Right ventricle myocardium superior (tissue), 1 donor: ENCODE measurements at regions of chr18 and their contacts with region 1.

Region 1: DNA sequence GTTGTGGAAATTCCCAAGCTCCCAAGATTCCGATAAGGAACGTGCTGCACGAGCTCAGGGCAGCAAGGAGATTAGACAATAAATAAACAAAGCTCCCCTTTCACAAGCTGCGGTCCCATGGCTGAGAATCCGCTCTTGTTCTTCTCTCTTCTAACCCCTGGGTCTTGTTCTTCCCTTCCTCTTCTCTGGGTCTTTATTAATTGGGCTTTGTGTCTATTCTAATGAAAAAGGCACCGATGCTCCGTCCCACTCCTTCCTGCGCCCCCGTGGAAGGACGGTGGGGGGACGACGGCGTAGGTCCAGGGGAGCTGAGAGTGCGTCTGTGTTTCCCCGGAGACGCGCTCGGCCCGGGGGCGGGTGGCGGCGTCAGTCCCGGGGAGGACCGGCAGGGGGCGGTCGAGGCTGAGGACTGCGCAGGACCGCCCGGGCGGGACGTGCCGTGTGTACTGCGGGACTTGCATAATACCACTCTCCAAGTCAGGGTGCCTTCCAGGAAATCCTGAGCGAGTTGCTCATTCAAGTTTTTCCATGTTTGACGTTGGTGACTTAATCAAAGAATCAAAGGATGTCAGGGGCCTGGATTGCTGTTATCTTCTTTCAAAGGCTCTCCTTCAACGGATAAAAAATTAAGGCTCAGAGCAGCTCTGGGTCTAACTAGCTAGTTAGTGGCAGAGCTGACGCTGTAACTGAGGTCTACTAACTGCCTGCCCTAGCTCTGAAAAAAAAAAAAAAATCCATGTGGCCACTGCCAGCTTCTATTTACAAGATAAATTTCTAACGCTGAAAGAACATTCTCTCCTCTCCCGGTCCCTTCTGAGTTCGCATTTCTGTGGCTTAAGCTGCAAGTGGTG is 321.4 kb downstream of the TGIF1 start:
- DNase-seq: peak; percentile 92
- ATAC-seq: peak; percentile 100

Region 2: GRCh38 chr18:3710712-3711269 is 60.6 kb before region 1 on chr18:
- intact Hi-C with region 1: no loop called
- DNase-seq: peak; percentile 67
- ATAC-seq: peak; percentile 75

Region 3: GRCh38 chr18:3852321-3852720 is 81.0 kb after region 1 on chr18:
- intact Hi-C with region 1: no loop called
- DNase-seq: no peak
- ATAC-seq: no peak

Region 4: GRCh38 chr18:3869848-3870247 is 98.5 kb after region 1 on chr18:
- intact Hi-C with region 1: loop called (anchors 10 kb)
- DNase-seq: no peak
- ATAC-seq: no peak

Region 5: GRCh38 chr18:3995476-3996102 is 224.2 kb after region 1 on chr18:
- intact Hi-C with region 1: loop called (anchors 2 kb)
- DNase-seq: no peak
- ATAC-seq: peak; percentile 64

Region 6: GRCh38 chr18:4068552-4069158 is 297.3 kb after region 1 on chr18:
- intact Hi-C with region 1: loop called (anchors 2 kb)
- DNase-seq: no peak
- ATAC-seq: no peak